ENCODE measurements at regions of chr18 and their contacts with region 1.

Region 1: DNA sequence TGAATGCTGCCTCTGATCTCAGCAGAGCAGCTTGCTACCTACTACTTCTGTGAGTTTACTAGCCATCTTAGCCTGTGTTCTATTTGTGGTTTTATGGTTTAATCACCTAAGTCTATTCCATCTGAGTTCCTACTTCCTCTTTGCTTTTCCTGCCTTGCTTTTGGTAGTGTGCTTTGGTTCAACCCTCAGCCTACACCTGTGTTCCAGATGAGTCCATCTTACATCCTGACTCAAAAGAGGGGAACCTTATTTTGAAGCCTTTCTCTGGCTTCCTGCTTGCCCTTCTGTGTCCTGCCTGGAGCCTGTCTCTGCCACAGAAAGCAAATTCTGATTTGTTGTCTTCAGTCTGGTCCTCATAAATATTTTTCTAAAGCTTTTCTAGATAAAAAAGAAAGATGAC is 530.3 kb upstream of the MEX3C start:
- DNase-seq: no peak
- ATAC-seq: peak; percentile 58
- H3K4me3 ChIP-seq: no peak overlapping the region
- H3K27ac ChIP-seq: peak overlapping the region; percentile 69
- H3K4me1 ChIP-seq: peaks cover 37% of the 10 kb centered on the region
- H3K27me3 ChIP-seq: no peaks in the 10 kb centered on the region
- CTCF ChIP-seq: no peak
- EP300 ChIP-seq: peak in 1 of 2 experiments; percentile 53; a peak in 1 of 4 replicates
- POLR2A ChIP-seq: no peak
- RAD21 ChIP-seq: no peak

Region 2: DNA sequence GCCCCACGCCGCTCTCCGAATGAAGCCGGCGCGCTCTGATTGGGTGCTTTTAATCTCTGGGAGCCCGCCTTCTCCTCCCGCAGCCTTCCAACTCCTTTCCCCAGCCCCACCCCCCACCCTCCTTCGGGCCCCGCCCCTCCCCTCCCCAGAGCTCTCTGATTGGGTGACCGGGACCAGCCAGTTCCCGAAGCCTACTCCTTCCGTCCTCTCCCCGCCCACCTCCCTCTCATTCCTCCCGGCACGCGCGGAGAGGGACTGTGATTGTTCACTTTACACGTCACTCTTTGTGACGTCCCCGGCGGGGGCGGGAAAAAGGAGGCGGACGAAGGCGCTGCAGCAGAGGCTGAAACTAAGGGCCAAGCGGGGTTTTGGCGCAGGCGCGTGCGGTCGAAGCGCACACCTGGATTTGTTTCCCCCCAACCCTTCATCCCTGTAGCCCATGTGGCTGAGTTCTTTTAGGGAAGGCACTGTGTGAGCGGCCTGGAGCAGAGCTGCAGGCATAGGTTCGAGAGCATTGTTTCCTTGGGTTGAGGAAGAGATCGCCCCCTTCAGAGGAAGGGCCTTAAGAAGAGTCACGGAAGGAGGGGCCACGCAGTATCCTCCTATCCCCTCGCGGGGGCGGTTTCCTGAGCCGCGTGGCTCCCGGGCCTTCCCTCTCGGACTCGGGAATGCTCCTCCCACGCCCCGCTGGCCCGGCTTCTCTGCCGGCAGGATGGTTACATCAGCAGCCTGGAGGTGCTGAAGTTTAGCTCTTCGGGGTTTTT is 529.9 kb before region 1 on chr18 and contains the start of gene MEX3C:
- CTCF ChIA-PET with region 1: no interaction called
- POLR2A ChIA-PET with region 1: no interaction called
- RAD21 ChIA-PET with region 1: interaction called, 3 read pairs
- SMC1A ChIA-PET with region 1: no interaction called
- in situ Hi-C with region 1: no loop called
- intact Hi-C with region 1: loop called (anchors 10 kb)
- DNase-seq: peak; percentile 95
- ATAC-seq: peak; percentile 83
- H3K4me3 ChIP-seq: peak within 1 kb of the TSS; percentile 69
- H3K27ac ChIP-seq: peak within 1 kb of the TSS; percentile 95
- H3K4me1 ChIP-seq: no peaks in the 10 kb centered on the region
- H3K27me3 ChIP-seq: no peaks in the 10 kb centered on the region
- CTCF ChIP-seq: peak in 2 of 3 experiments; percentile 9 to 23; a peak in 2 of 6 replicates
- EP300 ChIP-seq: no peak
- POLR2A ChIP-seq: peak; percentile 77
- RAD21 ChIP-seq: no peak
- polyA plus RNA-seq, gene MEX3C: 7.9 to 9.9 TPM

Region 3: GRCh38 chr18:51417643-51418483 is 309.9 kb before region 1 on chr18:
- CTCF ChIA-PET with region 1: no interaction called
- POLR2A ChIA-PET with region 1: no interaction called
- RAD21 ChIA-PET with region 1: no interaction called
- SMC1A ChIA-PET with region 1: no interaction called
- in situ Hi-C with region 1: no loop called
- intact Hi-C with region 1: no loop called
- DNase-seq: no peak
- ATAC-seq: no peak
- H3K4me3 ChIP-seq: no peak overlapping the region
- H3K27ac ChIP-seq: no peak overlapping the region
- H3K4me1 ChIP-seq: no peaks in the 10 kb centered on the region
- H3K27me3 ChIP-seq: no peaks in the 10 kb centered on the region
- CTCF ChIP-seq: no peak
- EP300 ChIP-seq: no peak
- POLR2A ChIP-seq: no peak
- RAD21 ChIP-seq: no peak

Region 4: GRCh38 chr18:51739044-51739666 is 11.4 kb after region 1 on chr18:
- CTCF ChIA-PET with region 1: interaction called, 9 read pairs
- POLR2A ChIA-PET with region 1: interaction called, 7 read pairs
- RAD21 ChIA-PET with region 1: interaction called, 32 read pairs
- SMC1A ChIA-PET with region 1: interaction called, 50 read pairs
- in situ Hi-C with region 1: no loop called
- intact Hi-C with region 1: no loop called
- DNase-seq: no peak
- ATAC-seq: peak; percentile 91
- H3K4me3 ChIP-seq: no peak overlapping the region
- H3K27ac ChIP-seq: no peak overlapping the region
- H3K4me1 ChIP-seq: no peaks in the 10 kb centered on the region; the same call in 1 of the 2 replicates
- H3K27me3 ChIP-seq: no peaks in the 10 kb centered on the region
- CTCF ChIP-seq: no peak
- EP300 ChIP-seq: peak; percentile 70 to 87
- POLR2A ChIP-seq: no peak
- RAD21 ChIP-seq: no peak

Region 5: DNA sequence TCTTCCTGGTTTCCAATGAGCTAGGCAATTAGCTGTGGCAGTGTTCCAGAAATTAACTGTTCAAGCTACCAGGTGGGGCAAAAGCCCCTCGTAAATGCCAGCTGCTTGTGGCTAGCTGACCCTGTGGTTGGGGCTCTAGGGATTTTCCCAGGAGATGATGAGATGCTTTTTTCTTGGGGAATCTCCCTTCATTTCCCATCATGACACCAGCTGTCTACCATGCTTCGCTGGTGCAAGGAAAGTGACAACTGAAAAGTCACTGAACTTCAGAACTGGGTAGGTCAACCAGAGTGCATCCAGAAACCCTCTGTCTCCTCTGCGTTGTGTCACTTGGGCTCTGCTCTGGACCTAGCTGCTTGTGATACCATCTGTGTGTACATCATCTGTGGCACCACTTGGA is 225.7 kb after region 1 on chr18:
- CTCF ChIA-PET with region 1: interaction called, 4 read pairs
- POLR2A ChIA-PET with region 1: interaction called, 3 read pairs
- RAD21 ChIA-PET with region 1: interaction called, 12 read pairs
- SMC1A ChIA-PET with region 1: interaction called, 19 read pairs
- in situ Hi-C with region 1: no loop called
- intact Hi-C with region 1: loop called (anchors 1 kb)
- DNase-seq: peak; percentile 83
- ATAC-seq: peak; percentile 91
- H3K4me3 ChIP-seq: no peak overlapping the region
- H3K27ac ChIP-seq: peak overlapping the region; percentile 76
- H3K4me1 ChIP-seq: peaks cover 22% of the 10 kb centered on the region
- H3K27me3 ChIP-seq: no peaks in the 10 kb centered on the region
- CTCF ChIP-seq: no peak
- EP300 ChIP-seq: peak; percentile 92 to 94
- POLR2A ChIP-seq: no peak; the same call in 1 of the 2 replicates
- RAD21 ChIP-seq: no peak; the same call in 1 of the 2 replicates

Region 6: GRCh38 chr18:52288403-52289004 is 560.7 kb after region 1 on chr18:
- CTCF ChIA-PET with region 1: interaction called, 5 read pairs
- POLR2A ChIA-PET with region 1: no interaction called
- RAD21 ChIA-PET with region 1: interaction called, 7 read pairs
- SMC1A ChIA-PET with region 1: interaction called, 4 read pairs
- in situ Hi-C with region 1: no loop called
- intact Hi-C with region 1: loop called (anchors 5 kb)
- DNase-seq: no peak
- ATAC-seq: peak; percentile 94
- H3K4me3 ChIP-seq: no peak overlapping the region
- H3K27ac ChIP-seq: no peak overlapping the region
- H3K4me1 ChIP-seq: no peaks in the 10 kb centered on the region
- H3K27me3 ChIP-seq: no peaks in the 10 kb centered on the region
- CTCF ChIP-seq: peak; percentile 88 to 93 (median 88)
- EP300 ChIP-seq: no peak
- POLR2A ChIP-seq: no peak
- RAD21 ChIP-seq: peak; percentile 92